PC-3 (cell line): ENCODE measurements at regions of chr3 and their contacts with region 1.

Region 1: GRCh38 chr3:158790901-158791589 is 10.8 kb upstream of the MFSD1 start:
- DNase-seq: peak; percentile 78
- ATAC-seq: no peak
- H3K4me3 ChIP-seq: no peak overlapping the region
- H3K27ac ChIP-seq: peak overlapping the region; percentile 100
- H3K4me1 ChIP-seq: peaks cover 46% of the 10 kb centered on the region
- H3K27me3 ChIP-seq: no peaks in the 10 kb centered on the region
- CTCF ChIP-seq: peak; percentile 79

Region 2: DNA sequence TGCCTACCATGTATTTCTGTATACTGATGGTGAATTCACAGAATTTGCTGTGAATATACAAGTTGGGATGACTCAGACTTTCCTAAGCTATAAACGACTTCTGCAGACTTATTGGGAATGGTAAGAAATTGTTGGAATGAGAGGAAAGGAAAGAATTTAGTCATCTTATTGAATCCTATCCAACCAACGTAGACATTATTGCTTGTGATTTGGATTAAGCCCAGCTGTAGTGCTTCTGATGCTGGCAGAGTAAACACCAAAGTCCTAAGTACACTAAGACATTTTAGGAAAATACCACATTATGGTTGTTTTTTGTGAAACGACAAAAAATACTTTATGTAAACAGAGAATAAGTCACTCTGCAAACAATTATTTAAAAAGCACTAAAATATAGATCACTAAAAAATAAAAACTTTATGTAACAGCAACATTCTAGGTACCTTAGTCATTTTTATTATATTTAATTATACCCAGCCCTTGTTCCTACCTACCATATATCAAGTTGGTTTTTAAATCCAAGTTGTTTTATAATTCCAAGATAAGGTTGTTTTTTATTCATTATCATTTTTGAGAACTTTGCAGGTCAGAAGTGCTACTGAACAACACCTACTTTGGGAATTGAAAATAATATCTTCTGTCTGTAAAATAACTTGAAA is 319.3 kb before region 1 on chr3:
- CTCF ChIA-PET with region 1: no interaction called
- POLR2A ChIA-PET with region 1: no interaction called
- intact Hi-C with region 1: loop called (anchors 5 kb)
- DNase-seq: peak; percentile 93
- ATAC-seq: peak; percentile 83
- H3K4me3 ChIP-seq: no peak overlapping the region
- H3K27ac ChIP-seq: peak overlapping the region; percentile 89
- H3K4me1 ChIP-seq: peaks cover 18% of the 10 kb centered on the region
- H3K27me3 ChIP-seq: no peaks in the 10 kb centered on the region
- CTCF ChIP-seq: no peak

Region 3: GRCh38 chr3:158539414-158540014 is 251.5 kb before region 1 on chr3:
- CTCF ChIA-PET with region 1: no interaction called
- POLR2A ChIA-PET with region 1: no interaction called
- intact Hi-C with region 1: loop called (anchors 1 kb)
- DNase-seq: peak; percentile 58
- ATAC-seq: no peak; the same call in 1 of the 2 replicates
- H3K4me3 ChIP-seq: no peak overlapping the region
- H3K27ac ChIP-seq: no peak overlapping the region
- H3K4me1 ChIP-seq: no peaks in the 10 kb centered on the region
- H3K27me3 ChIP-seq: no peaks in the 10 kb centered on the region
- CTCF ChIP-seq: peak; percentile 63

Region 4: DNA sequence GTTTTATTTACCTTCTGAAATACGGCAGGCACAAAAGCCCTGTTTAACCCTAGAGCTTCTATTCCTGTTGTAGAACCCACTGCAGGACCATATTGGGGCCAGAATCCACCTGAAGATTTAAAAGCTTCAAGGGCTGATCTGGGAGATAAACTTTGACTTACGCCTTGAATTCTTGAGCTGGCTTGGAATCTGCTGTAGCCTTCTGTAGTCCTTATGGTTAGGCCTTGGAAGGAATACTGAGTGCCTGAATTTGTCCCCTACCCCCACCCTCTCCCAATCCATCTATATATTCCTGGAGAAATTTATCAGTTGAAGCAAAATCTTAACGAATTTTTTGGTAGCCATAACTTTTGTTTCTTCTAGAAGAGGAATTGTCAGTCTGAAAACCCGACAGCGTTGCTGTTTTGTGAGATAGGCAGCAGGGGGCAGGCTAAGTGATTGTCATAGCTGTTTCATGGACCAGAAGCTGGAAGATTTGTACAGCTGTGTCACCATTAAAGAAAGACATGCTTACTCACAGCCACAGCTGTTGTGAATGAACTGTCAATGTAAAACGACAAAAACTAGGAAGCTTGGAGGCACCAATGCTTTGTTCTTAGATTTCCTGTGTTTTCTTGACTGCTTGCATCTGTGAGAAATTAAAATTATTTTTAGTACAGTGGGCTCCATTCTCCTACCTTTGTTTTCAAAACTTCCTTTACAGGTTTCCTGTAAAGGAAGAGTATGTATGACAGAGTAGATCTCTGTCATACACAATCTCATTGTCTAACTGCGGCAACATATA is 131.4 kb before region 1 on chr3:
- CTCF ChIA-PET with region 1: interaction called, 8 read pairs
- POLR2A ChIA-PET with region 1: interaction called, 8 read pairs
- intact Hi-C with region 1: loop called (anchors 1 kb)
- DNase-seq: peak; percentile 70
- ATAC-seq: peak; percentile 65
- H3K4me3 ChIP-seq: no peak overlapping the region
- H3K27ac ChIP-seq: peak overlapping the region; percentile 49
- H3K4me1 ChIP-seq: 0 out of 2 replicates have a peak, but pooled peaks cover 2% of the 10 kb centered on the region
- H3K27me3 ChIP-seq: no peaks in the 10 kb centered on the region
- CTCF ChIP-seq: peak; percentile 73

Region 5: GRCh38 chr3:158672293-158673176 is 118.5 kb before region 1 on chr3 and contains the start of gene LXN:
- CTCF ChIA-PET with region 1: no interaction called
- POLR2A ChIA-PET with region 1: no interaction called
- intact Hi-C with region 1: loop called (anchors 1 kb)
- DNase-seq: peak; percentile 91
- ATAC-seq: peak; percentile 98
- H3K4me3 ChIP-seq: peak within 1 kb of the TSS; percentile 75
- H3K27ac ChIP-seq: peak within 1 kb of the TSS; percentile 94
- H3K4me1 ChIP-seq: peaks cover 8% of the 10 kb centered on the region
- H3K27me3 ChIP-seq: no peaks in the 10 kb centered on the region
- CTCF ChIP-seq: peak; percentile 73
- total RNA-seq, gene LXN: 332 and 471 TPM in 2 replicates

Region 6: DNA sequence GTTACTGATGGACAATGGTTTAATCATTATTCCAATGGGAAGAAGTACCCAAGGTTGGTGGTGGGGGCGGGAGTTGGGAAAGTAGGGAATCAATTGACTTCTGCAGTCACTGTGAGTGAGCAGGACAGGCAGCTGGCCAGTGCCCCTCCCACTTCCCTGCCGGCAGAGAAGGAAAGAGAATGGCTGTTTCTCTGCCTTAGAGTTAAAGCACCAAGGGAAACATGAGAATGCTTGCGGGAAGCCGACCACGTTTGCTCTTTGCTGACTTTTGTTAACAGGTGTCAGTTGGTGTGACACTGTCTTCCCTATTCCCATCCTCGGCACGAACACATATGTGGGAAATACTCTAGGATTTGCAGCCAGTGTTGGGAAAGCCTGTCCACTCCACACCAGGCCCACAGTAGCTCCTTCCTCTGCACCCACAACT is 22.7 kb before region 1 on chr3:
- CTCF ChIA-PET with region 1: interaction called, 16 read pairs
- POLR2A ChIA-PET with region 1: no interaction called
- intact Hi-C with region 1: no loop called
- DNase-seq: peak; percentile 65
- ATAC-seq: 0 out of 2 replicates have a peak, but pooled peaks have one; percentile 24
- H3K4me3 ChIP-seq: no peak overlapping the region
- H3K27ac ChIP-seq: peak overlapping the region; percentile 100
- H3K4me1 ChIP-seq: peaks cover 86% of the 10 kb centered on the region
- H3K27me3 ChIP-seq: no peaks in the 10 kb centered on the region
- CTCF ChIP-seq: no peak

Region 7: DNA sequence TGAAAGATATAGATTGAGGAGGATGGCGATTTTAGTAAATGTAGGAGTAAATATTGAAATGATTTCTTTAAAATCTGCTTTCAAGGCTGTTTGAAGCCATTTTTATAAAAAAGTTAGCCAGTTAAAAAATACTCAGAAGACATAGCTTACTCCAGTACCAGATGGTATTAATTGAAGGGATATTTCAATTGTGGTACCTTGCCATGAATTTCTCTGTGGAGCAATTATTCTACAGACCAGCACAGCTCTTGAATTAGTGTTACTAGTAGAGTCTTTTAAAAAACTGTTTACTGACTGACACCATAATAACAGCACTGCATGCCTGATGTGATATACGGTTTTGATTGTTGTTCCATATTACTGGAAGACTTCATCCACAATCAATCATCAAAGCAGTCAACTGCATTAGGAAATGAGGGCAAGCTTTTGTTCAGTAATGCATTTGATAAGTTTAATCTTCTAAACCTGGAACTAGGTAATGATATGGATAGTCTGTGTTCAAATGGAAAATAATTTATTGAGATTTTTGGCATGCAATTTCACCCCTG is 117.2 kb after region 1 on chr3:
- CTCF ChIA-PET with region 1: interaction called, 11 read pairs
- POLR2A ChIA-PET with region 1: no interaction called
- intact Hi-C with region 1: no loop called
- DNase-seq: no peak
- ATAC-seq: no peak
- H3K4me3 ChIP-seq: no peak overlapping the region
- H3K27ac ChIP-seq: no peak overlapping the region
- H3K4me1 ChIP-seq: peaks cover 12% of the 10 kb centered on the region; the same call in 1 of the 2 replicates
- H3K27me3 ChIP-seq: no peaks in the 10 kb centered on the region
- CTCF ChIP-seq: no peak